Gastrocnemius medialis (tissue), 4 donors: ENCODE measurements at regions of chr17 and their contacts with region 1.

Region 1: GRCh38 chr17:50865984-50866774 is at the start of gene TOB1:
- DNase-seq: peak; percentile 98 to 99
- ATAC-seq: peak; percentile 68
- H3K4me3 ChIP-seq: peak within 1 kb of the TSS; percentile 67 to 98 (median 84)
- H3K27ac ChIP-seq: peak within 1 kb of the TSS; percentile 98 to 100 (median 99)
- H3K4me1 ChIP-seq: peaks cover 34 to 51% of the 10 kb centered on the region in 2 donors
- H3K27me3 ChIP-seq: no peaks in the 10 kb centered on the region
- CTCF ChIP-seq: no peak
- POLR2A ChIP-seq: peak; percentile 99
- total RNA-seq, gene TOB1: 13.6 to 53.5 (median 28.2) TPM

Region 2: DNA sequence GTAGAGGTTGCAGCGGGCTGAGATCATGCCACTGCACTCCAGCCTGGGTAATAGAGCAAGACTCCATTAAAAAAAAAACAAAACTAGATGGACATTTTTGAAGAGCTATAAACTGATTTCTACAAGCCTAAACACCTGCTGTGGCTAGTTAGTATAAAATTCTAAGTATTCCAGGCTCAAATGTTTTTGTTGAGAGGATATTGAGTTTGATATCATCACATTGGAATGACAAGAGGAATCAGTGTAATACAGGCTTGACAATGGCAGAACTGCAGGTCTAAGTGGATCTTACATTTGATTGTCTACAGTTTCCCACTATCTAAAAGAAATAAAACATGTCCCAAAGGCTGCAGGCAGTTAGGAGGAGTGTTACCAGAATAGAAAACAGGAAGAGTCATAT is 847.3 kb before region 1 on chr17:
- in situ Hi-C with region 1: no loop called
- intact Hi-C with region 1: no loop called
- DNase-seq: no peak
- ATAC-seq: no peak
- H3K4me3 ChIP-seq: no peak overlapping the region
- H3K27ac ChIP-seq: no peak overlapping the region
- H3K4me1 ChIP-seq: no peaks in the 10 kb centered on the region
- H3K27me3 ChIP-seq: no peaks in the 10 kb centered on the region
- CTCF ChIP-seq: no peak
- POLR2A ChIP-seq: no peak

Region 3: DNA sequence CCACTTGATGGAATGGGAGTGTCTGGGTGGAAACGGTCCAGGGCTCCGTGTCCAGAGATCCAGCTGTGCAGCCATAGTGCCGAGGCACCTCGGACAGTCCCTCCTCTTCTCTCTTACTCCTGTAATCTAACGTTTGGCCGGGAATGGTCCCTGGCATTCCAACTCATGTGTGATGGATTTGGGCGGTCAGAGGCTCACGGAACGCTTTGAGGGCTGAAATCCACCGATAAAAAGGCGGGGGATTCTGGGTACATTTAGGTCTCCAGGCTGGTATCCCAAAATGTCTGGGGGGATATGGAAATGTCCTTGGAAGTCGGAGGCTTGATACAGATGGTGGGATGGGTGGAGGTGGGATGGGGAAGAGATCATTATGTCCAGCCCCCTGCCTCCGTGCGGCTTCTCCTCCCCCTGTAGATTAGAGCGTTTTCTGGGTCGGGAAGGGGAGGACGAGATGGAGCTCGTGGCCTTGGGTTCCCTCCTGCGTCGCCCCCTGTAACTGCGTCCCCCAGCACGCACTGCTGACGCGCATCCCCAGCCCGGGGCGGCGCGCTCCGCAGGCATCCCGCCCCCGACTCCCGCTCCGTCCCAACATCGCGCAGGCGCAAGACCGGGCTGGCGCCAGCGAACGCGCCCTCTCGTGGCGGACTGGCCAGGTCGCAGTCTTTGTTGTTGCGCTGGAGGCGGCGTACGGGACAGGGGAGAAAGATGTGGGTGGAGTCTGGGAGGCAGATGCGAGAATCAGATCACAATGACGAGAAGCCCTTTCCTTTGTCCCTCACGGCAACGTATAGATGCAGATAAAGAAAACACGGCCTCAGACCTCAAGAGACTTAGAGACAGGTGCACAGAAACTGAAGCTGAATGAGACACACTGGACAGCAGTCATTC is 704.9 kb before region 1 on chr17:
- in situ Hi-C with region 1: no loop called
- intact Hi-C with region 1: loop called (anchors 10 kb)
- DNase-seq: peak; percentile 81 to 85
- ATAC-seq: peak; percentile 67 to 70
- H3K4me3 ChIP-seq: peak overlapping the region; percentile 52 to 73 (median 62)
- H3K27ac ChIP-seq: peak overlapping the region; percentile 53 to 69 (median 60)
- H3K4me1 ChIP-seq: peaks cover 27 to 39% of the 10 kb centered on the region in 2 donors
- H3K27me3 ChIP-seq: no peaks in the 10 kb centered on the region
- CTCF ChIP-seq: peak; percentile 94 to 97 (median 95)
- POLR2A ChIP-seq: peak; percentile 36 to 38

Region 4: GRCh38 chr17:50904521-50905459 is 38.6 kb after region 1 on chr17:
- in situ Hi-C with region 1: no loop called
- intact Hi-C with region 1: loop called (anchors 2 kb)
- DNase-seq: peak; percentile 9 to 46
- ATAC-seq: peak; percentile 54 to 59
- H3K4me3 ChIP-seq: peak overlapping the region in 3 of 4 donors; percentile 13 to 36 (median 22)
- H3K27ac ChIP-seq: peak overlapping the region; percentile 90 to 98 (median 94)
- H3K4me1 ChIP-seq: peaks cover 30 to 35% of the 10 kb centered on the region in 2 donors
- H3K27me3 ChIP-seq: no peaks in the 10 kb centered on the region
- CTCF ChIP-seq: no peak
- POLR2A ChIP-seq: peak in 1 of 2 donors; percentile 14

Region 5: DNA sequence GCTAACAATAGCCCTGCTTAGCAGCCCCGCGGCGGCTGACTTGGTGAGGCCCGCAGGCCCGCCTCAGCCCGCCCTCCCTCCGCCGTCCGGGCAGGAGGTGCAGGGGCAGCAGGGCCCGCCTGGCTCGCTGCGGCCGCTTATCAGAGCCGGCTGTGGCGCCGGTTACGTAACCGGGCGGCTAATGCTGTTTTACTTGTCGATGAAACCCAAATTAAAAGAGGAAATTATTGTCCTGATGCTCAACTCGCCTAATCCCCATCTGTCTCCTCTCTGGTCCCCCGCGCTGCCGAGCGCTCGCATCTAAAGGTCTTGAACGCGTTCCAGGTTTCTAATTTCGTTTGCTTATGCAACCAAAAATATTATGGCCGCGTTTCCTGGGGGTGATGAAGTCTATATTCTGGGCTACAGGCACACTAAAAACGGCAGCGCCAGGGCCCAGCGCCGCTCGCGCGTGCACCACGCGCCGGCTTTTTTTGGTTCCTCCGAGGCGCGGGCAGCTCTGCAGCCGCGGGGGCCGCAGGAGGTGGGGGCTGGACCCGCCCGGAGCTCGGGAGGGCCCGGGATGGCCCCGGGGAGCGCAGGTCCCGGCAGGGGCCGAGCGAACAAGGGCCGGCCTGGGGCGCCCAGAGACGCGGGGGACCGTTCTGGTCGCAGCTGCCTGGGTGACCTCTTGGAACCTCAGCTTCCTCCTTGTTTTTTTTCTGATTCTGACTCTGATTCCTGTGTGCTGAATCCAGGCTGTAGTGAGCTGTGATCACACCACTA is 65.1 kb after region 1 on chr17:
- in situ Hi-C with region 1: no loop called
- intact Hi-C with region 1: loop called (anchors 1 kb)
- DNase-seq: peak; percentile 86 to 95
- ATAC-seq: peak; percentile 67 to 69
- H3K4me3 ChIP-seq: peak overlapping the region; percentile 54 to 61 (median 56)
- H3K27ac ChIP-seq: peak overlapping the region; percentile 90 to 99 (median 96)
- H3K4me1 ChIP-seq: peaks cover 45 to 53% of the 10 kb centered on the region in 2 donors
- H3K27me3 ChIP-seq: no peaks in the 10 kb centered on the region
- CTCF ChIP-seq: no peak
- POLR2A ChIP-seq: peak; percentile 83 to 88

Region 6: GRCh38 chr17:50956750-50957523 is 90.8 kb after region 1 on chr17:
- in situ Hi-C with region 1: loop called in 3 of 4 experiments (anchors 5 kb)
- intact Hi-C with region 1: no loop called
- DNase-seq: peak in 1 of 2 donors; percentile 76
- ATAC-seq: peak in 1 of 2 donors; percentile 35
- H3K4me3 ChIP-seq: no peak overlapping the region
- H3K27ac ChIP-seq: peak overlapping the region; percentile 98 to 100 (median 100)
- H3K4me1 ChIP-seq: peaks cover 37 to 42% of the 10 kb centered on the region in 2 donors
- H3K27me3 ChIP-seq: no peaks in the 10 kb centered on the region
- CTCF ChIP-seq: peak; percentile 65 to 82 (median 78)
- POLR2A ChIP-seq: no peak

Region 7: GRCh38 chr17:50967795-50968194 is 101.6 kb after region 1 on chr17:
- in situ Hi-C with region 1: no loop called
- intact Hi-C with region 1: no loop called
- DNase-seq: no peak
- ATAC-seq: no peak
- H3K4me3 ChIP-seq: no peak overlapping the region
- H3K27ac ChIP-seq: peak overlapping the region; percentile 1 to 48 (median 38)
- H3K4me1 ChIP-seq: peaks cover 0 to 13% of the 10 kb centered on the region in 2 donors
- H3K27me3 ChIP-seq: no peaks in the 10 kb centered on the region
- CTCF ChIP-seq: no peak
- POLR2A ChIP-seq: no peak

Region 8: GRCh38 chr17:51000835-51001638 is 134.9 kb after region 1 on chr17:
- in situ Hi-C with region 1: no loop called
- intact Hi-C with region 1: no loop called
- DNase-seq: no peak
- ATAC-seq: peak in 1 of 2 donors; percentile 64
- H3K4me3 ChIP-seq: no peak overlapping the region
- H3K27ac ChIP-seq: peak overlapping the region in 1 of 4 donors; percentile 20
- H3K4me1 ChIP-seq: no peaks in the 10 kb centered on the region
- H3K27me3 ChIP-seq: no peaks in the 10 kb centered on the region
- CTCF ChIP-seq: peak; percentile 35 to 63 (median 48)
- POLR2A ChIP-seq: no peak

Region 9: GRCh38 chr17:51120739-51121617 is 254.8 kb after region 1 on chr17 and contains the start of gene SPAG9:
- in situ Hi-C with region 1: loop called in 1 of 4 experiments (anchors 10 kb)
- intact Hi-C with region 1: loop called (anchors 2 kb)
- DNase-seq: peak; percentile 95 to 96
- ATAC-seq: peak; percentile 69 to 72
- H3K4me3 ChIP-seq: peak within 1 kb of the TSS; percentile 81 to 99 (median 89)
- H3K27ac ChIP-seq: peak within 1 kb of the TSS; percentile 99 to 100 (median 100)
- H3K4me1 ChIP-seq: peaks cover 38% of the 10 kb centered on the region in 2 donors
- H3K27me3 ChIP-seq: no peaks in the 10 kb centered on the region
- CTCF ChIP-seq: no peak
- POLR2A ChIP-seq: peak; percentile 79 to 83
- total RNA-seq, gene SPAG9: 139 to 171 (median 143) TPM